Sigmoid colon (tissue), 7 donors: ENCODE measurements at regions of chr9 and their contacts with region 1.

Region 1: GRCh38 chr9:121698627-121699570 is 47.5 kb downstream of the DAB2IP start:
- DNase-seq: peak; percentile 84
- H3K4me3 ChIP-seq: peak overlapping the region; percentile 35 to 57 (median 54)
- H3K27ac ChIP-seq: peak overlapping the region; percentile 62 to 74 (median 67)
- H3K4me1 ChIP-seq: peaks cover 0 to 40% (median 36%) of the 10 kb centered on the region in 4 donors
- H3K27me3 ChIP-seq: no peaks in the 10 kb centered on the region
- CTCF ChIP-seq: no peak
- EP300 ChIP-seq: no peak
- POLR2A ChIP-seq: no peak

Region 2: DNA sequence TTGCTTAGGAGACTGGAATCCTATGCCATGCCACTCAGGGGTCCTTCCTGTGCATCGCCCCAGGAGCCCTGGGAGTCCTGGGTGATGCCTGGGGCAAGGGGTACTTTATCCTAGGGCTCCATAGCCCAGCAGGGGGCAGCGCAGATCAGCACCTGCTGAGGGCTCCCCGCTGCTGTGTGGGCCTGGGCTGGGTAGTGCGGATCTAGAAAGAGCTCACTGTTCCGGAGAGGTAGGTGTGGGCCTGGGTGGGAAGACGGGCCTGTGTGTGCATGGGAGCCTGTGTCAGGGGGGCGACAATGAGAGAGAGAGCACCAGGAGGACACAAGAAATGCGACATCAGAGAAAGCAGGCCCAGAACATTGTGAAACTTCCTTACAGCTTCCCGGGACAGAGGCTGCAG is 58.8 kb before region 1 on chr9:
- intact Hi-C with region 1: no loop called
- DNase-seq: peak; percentile 82
- H3K4me3 ChIP-seq: no peak overlapping the region
- H3K27ac ChIP-seq: peak overlapping the region in 3 of 4 donors; percentile 40 to 69 (median 51)
- H3K4me1 ChIP-seq: peaks cover 0 to 53% (median 51%) of the 10 kb centered on the region in 4 donors
- H3K27me3 ChIP-seq: no peaks in the 10 kb centered on the region
- CTCF ChIP-seq: peak; percentile 28 to 64 (median 64)
- EP300 ChIP-seq: no peak
- POLR2A ChIP-seq: no peak

Region 3: DNA sequence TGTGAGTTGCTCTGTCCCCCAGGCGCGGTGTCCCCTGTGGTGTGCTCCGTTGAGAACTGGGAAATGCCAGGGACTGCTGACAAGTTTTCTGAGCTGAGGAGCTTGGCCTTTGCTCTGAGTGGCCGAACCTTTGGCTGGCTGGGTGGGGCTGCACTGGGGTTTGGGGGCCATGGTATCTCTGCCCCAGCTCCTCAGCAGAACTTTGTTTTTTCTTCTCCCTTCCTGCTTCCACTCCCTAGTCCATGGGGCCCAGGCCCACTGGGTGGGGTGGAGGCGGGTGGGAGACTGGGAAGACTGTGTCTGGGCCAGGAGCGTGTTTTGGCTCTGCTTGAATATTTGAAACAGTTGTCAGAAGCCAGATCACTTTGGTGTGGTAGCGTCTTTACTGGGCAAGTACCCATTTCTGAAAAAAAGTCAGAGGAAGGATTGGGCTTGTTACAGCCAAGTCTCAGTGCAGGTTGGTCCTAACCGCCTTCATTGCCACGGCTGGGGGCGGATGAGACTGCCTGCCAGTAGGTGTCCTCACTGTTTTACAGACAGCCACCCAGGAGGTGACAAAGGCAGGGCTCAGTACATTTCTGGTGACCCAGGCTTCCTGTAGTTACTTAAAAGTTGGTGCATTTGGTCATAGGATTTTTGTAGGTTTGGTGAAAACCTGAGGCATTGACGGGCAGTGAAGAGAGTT is 45.2 kb after region 1 on chr9:
- intact Hi-C with region 1: loop called (anchors 5 kb)
- DNase-seq: peak; percentile 84
- H3K4me3 ChIP-seq: peak overlapping the region; percentile 47 to 56 (median 54)
- H3K27ac ChIP-seq: peak overlapping the region; percentile 88 to 94 (median 90)
- H3K4me1 ChIP-seq: peaks cover 0 to 99% (median 96%) of the 10 kb centered on the region in 4 donors
- H3K27me3 ChIP-seq: no peaks in the 10 kb centered on the region
- CTCF ChIP-seq: peak in 2 of 4 experiments; percentile 35 to 42
- EP300 ChIP-seq: no peak
- POLR2A ChIP-seq: no peak

Region 4: GRCh38 chr9:121779381-121780117 is 80.7 kb after region 1 on chr9:
- intact Hi-C with region 1: loop called (anchors 5 kb)
- DNase-seq: peak; percentile 87
- H3K4me3 ChIP-seq: no peak overlapping the region
- H3K27ac ChIP-seq: peak overlapping the region in 3 of 4 donors; percentile 66 to 83 (median 73)
- H3K4me1 ChIP-seq: peaks cover 0 to 30% (median 23%) of the 10 kb centered on the region in 4 donors
- H3K27me3 ChIP-seq: no peaks in the 10 kb centered on the region
- CTCF ChIP-seq: no peak
- EP300 ChIP-seq: peak; percentile 60 to 97 (median 93)
- POLR2A ChIP-seq: no peak

Region 5: DNA sequence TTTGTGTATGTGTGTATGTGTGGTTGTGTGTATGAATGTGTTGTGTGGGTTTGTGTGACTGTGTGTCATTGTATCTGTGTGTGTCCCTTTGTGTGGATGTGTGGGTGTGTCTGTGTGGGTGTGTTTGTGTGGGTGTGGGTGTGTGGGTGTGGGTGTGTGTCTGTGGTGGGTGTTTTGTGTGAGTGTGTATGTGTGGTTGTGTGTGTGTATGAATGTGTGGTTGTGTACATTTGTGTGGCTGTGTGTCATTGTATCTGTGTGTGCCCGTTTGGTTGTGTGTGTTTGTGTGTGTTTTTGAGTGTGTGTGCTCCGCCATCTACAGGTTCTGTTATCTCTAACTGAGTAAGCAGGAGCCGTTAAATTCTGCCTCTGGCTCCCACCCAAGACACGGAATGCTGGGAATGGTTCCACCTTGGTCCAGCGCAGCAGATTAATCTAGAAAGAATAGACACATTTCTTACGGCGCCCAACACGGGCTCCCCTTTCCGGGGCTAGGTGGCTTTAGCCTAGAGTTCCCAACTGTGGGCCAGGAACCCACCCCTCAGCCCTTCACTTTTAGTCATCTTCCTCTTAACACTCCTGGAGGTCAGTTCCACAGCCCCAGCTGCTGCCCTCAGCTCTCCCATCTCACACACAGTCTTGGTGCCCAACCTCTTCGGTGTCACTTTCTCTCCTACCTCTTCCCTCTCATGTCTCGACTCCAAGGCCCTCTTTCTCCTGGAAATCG is 197.1 kb after region 1 on chr9:
- intact Hi-C with region 1: loop called (anchors 10 kb)
- DNase-seq: peak; percentile 76
- H3K4me3 ChIP-seq: no peak overlapping the region
- H3K27ac ChIP-seq: peak overlapping the region in 1 of 4 donors; percentile 25
- H3K4me1 ChIP-seq: peaks cover 0 to 4% (median 2%) of the 10 kb centered on the region in 4 donors
- H3K27me3 ChIP-seq: no peaks in the 10 kb centered on the region
- CTCF ChIP-seq: peak in 1 of 4 experiments; percentile 22
- EP300 ChIP-seq: no peak
- POLR2A ChIP-seq: no peak